PC-9 (cell line): ENCODE measurements at regions of chr6 and their contacts with region 1.

Region 1: DNA sequence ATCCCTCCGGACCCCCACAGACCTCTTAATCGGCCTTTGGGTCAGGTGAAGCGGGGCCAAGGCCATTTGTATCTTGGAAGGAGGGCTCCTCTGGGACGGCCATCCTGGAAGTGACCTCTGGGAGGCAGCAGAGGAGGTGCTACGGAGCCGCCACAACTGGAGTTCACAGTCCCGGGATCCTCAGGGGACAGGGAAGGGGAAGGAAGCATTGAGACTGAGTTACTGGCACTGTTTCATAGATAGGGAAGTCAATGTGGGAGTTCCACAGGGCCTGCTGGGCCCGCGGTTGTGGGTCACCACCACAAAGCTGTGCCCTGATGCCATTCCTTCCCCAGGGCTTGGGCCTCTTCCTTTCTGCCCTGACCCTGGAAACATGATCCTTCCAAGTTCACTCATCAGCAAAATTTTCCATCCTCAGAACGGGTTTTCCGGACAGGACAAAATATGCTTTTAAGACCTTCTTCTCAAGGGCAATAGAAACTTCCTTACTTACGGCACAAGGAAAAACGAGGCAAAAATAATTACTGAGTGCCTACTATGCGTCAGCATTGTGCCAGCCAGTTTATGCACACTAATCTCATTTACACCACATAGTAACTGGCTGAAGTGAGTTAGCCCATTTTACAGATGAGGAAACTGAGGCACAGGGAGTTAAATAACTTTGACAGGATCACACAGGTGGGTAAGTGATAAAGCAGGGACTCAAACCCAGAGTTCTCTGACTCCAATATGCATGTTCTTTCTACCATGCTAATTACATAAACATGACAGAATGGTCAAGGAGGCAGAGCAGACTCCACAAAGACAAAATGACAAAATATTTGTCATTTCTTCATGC is 143.8 kb downstream of the UNC5CL start:
- DNase-seq: peak in 1 of 2 experiments; percentile 58
- H3K4me3 ChIP-seq: no peak overlapping the region
- H3K27ac ChIP-seq: no peak overlapping the region
- H3K4me1 ChIP-seq: no peaks in the 10 kb centered on the region
- H3K27me3 ChIP-seq: peaks cover 44% of the 10 kb centered on the region
- CTCF ChIP-seq: peak; percentile 74

Region 2: DNA sequence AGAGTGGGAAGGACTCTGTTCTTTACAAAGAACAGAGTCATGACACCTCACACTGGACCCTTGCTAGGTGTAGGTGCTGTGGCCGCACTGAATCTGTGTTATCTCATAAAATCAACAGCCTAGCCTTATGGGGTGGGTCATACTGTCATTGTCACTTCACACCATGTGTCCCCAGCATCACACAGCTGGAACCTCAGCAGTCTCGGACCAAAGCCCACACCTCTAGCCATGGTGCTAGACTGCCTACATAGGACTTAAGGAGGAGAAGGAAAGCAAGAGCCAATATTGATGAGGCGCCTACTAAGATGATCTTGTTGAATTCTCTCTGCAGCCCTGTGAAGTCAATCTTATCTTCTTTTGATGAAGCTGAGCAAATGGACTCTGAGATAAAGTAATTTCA is 112.8 kb after region 1 on chr6:
- CTCF ChIA-PET with region 1: no interaction called
- POLR2A ChIA-PET with region 1: no interaction called
- intact Hi-C with region 1: loop called (anchors 5 kb)
- DNase-seq: no peak
- H3K4me3 ChIP-seq: no peak overlapping the region
- H3K27ac ChIP-seq: no peak overlapping the region
- H3K4me1 ChIP-seq: no peaks in the 10 kb centered on the region
- H3K27me3 ChIP-seq: peaks cover 13% of the 10 kb centered on the region; the same call in 1 of the 2 replicates
- CTCF ChIP-seq: no peak

Region 3: GRCh38 chr6:41021832-41022231 is 126.7 kb after region 1 on chr6:
- CTCF ChIA-PET with region 1: no interaction called
- POLR2A ChIA-PET with region 1: interaction called, 5 read pairs
- intact Hi-C with region 1: loop called (anchors 1 kb)
- DNase-seq: peak; percentile 46 to 56
- H3K4me3 ChIP-seq: no peak overlapping the region
- H3K27ac ChIP-seq: no peak overlapping the region
- H3K4me1 ChIP-seq: peaks cover 12% of the 10 kb centered on the region; the same call in 1 of the 2 replicates
- H3K27me3 ChIP-seq: no peaks in the 10 kb centered on the region
- CTCF ChIP-seq: 0 out of 2 replicates have a peak, but pooled peaks have one; percentile 26